ENCODE measurements at regions of chr16 and their contacts with region 1.

Region 1: DNA sequence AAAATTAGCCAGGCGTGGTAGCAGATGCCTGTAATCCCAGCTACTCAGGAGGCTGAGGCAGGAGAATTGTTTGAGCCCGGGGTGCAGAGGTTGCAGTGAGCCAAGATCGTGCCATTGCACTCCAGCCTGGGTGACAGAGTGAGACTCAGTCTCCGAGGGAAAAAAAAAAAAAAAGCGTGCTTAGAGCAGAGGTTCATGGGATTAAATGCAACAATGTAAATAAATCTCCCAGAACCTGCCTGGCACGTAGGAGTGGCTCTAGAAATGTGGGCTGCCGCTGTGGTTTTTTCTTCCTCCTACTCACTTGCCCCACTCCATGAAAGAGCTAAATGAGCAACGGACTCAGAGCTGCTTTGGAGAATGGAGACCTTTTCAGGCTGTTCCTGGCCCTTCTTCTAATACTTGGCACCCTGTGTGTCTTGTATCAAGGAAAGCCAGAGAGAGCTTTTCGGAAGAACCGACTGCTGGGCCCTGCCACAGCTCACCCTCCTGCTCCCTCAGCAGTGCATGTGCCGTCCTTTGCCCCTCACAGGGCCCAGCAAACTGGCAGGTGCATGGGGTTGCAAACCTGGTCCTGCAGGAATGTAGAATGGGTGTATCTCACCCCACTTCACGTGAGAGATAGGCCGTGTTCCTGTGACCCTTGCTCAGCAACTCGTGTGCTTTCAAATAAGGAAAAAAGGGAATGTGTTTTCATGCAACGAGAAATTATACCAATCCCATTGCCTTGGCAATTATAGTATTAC is 52.0 kb downstream of the LDHD start:
- DNase-seq: peak in 1 of 4 experiments; percentile 66
- ATAC-seq: peak; percentile 13
- H3K4me3 ChIP-seq: 0 out of 2 replicates have a peak overlapping the region, but pooled peaks have one; percentile 8
- H3K27ac ChIP-seq: peak overlapping the region; percentile 73
- H3K4me1 ChIP-seq: peaks cover 51 to 89% of the 10 kb centered on the region in 2 experiments
- H3K27me3 ChIP-seq: no peaks in the 10 kb centered on the region
- CTCF ChIP-seq: no peak
- EP300 ChIP-seq: peak; percentile 38; the same call in 1 of the 2 replicates
- POLR2A ChIP-seq: no peak
- RAD21 ChIP-seq: no peak

Region 2: GRCh38 chr16:75043175-75043895 is 21.2 kb before region 1 on chr16:
- CTCF ChIA-PET with region 1: no interaction called
- POLR2A ChIA-PET with region 1: interaction called, 10 read pairs
- in situ Hi-C with region 1: no loop called
- intact Hi-C with region 1: loop called (anchors 1 kb)
- DNase-seq: peak; percentile 63 to 92 (median 74)
- ATAC-seq: peak; percentile 88
- H3K4me3 ChIP-seq: no peak overlapping the region; the same call in 1 of the 2 replicates
- H3K27ac ChIP-seq: peak overlapping the region; percentile 95
- H3K4me1 ChIP-seq: peaks cover 26 to 61% of the 10 kb centered on the region in 2 experiments
- H3K27me3 ChIP-seq: no peaks in the 10 kb centered on the region
- CTCF ChIP-seq: no peak; a peak in 1 of 6 replicates
- EP300 ChIP-seq: peak; percentile 99
- POLR2A ChIP-seq: no peak
- RAD21 ChIP-seq: peak in 1 of 2 experiments; percentile 33; a peak in 2 of 4 replicates

Region 3: DNA sequence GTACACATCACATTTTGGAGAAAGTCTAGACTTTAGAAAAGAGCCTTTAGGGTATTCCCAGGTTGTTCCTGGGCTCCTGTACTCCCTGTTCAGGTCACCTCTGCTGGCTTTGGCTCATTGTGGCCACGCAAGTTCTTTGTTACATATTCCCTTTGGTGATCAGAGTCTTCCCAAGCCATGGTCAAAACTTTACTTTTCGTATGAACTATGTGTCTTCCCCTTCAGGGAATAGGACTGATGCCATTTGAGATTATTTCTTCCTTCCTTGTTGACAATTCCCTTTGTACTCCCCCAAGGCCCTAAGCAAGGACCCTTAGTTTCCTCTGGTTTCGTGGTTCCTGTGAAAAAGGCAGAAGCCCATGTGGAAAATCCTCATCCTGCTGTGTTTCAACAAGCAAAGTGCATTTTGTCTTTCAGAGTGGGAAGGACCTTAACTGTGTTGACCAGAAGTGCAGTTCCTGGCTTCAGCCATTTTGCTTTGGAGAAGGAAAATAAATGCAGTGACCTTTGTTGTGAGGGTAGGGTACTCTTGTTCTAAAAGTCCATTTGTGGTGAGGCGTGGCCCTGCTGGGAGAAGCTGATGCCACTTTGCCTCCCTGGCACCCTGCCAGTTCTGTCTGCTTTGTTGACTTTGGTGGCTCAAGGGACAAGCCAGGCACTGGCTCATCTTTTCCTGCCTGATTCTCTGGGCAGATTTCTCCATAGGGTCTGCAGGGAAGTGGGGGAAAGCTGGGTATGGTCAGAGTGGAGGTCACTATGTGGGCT is 10.6 kb before region 1 on chr16:
- CTCF ChIA-PET with region 1: no interaction called
- POLR2A ChIA-PET with region 1: interaction called, 25 read pairs
- in situ Hi-C with region 1: no loop called
- intact Hi-C with region 1: no loop called
- DNase-seq: peak in 2 of 4 experiments; percentile 20 to 49
- ATAC-seq: peak; percentile 34; the same call in 2 of the 3 replicates
- H3K4me3 ChIP-seq: no peak overlapping the region
- H3K27ac ChIP-seq: peak overlapping the region; percentile 43
- H3K4me1 ChIP-seq: peaks cover 8 to 37% of the 10 kb centered on the region in 2 experiments; a peak in 4 of 5 replicates
- H3K27me3 ChIP-seq: no peaks in the 10 kb centered on the region
- CTCF ChIP-seq: no peak
- EP300 ChIP-seq: no peak
- POLR2A ChIP-seq: no peak
- RAD21 ChIP-seq: no peak

Region 4: DNA sequence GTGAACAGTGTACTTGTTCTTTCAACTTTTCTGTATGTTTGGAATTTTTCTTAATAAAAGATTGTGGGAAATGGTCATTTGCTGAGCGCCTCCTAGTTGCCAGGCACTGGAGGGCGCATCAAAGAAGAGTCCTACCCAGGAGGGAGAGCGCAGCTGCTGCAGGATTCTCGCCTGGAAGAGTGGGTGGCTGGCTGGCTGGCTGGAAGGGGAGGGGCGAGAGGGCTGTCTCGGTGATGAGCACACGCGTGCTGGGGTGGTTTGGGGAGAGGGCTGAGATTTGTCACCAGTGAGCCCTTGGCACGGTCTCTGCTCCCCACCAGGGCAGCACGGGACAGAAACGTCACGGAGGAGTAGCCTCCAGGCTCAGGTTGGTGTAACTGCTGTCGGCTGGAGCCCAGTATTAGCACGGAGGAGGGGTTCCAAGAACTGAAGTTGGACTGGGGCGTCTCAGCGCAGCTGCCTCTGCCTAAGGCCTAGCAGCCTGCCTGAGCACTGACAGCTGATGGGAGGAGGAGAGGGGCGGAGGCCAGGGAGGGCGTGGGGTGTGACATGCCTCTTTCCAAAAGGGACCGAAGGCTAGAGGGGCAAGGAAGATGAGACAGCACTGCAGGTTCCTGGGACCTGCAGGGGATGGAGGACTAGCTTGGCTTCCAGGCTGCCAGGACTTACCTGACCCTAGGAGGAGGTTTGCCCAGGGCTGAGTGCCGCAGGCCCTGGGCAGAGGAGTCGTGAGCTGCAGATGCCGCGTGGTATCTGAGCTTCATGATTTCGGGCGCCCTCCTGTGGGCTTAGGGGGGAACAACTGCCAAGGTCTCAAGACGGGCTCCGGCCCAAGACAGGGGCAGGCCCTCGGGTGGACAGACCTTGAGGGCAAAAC is 46.3 kb after region 1 on chr16:
- CTCF ChIA-PET with region 1: no interaction called
- POLR2A ChIA-PET with region 1: no interaction called
- in situ Hi-C with region 1: no loop called
- intact Hi-C with region 1: loop called (anchors 2 kb)
- DNase-seq: peak; percentile 87 to 93 (median 88)
- ATAC-seq: peak; percentile 92
- H3K4me3 ChIP-seq: no peak overlapping the region
- H3K27ac ChIP-seq: peak overlapping the region; percentile 13; the same call in 2 of the 3 replicates
- H3K4me1 ChIP-seq: peaks cover 11 to 72% of the 10 kb centered on the region in 2 experiments; a peak in 4 of 5 replicates
- H3K27me3 ChIP-seq: no peaks in the 10 kb centered on the region
- CTCF ChIP-seq: peak; percentile 90 to 95 (median 92)
- EP300 ChIP-seq: peak; percentile 40
- POLR2A ChIP-seq: peak; percentile 25; the same call in 1 of the 2 replicates
- RAD21 ChIP-seq: peak; percentile 95